ENCODE measurements at regions of chr1 and their contacts with region 1.

Region 1: GRCh38 chr1:23496490-23497181 is 12.7 kb upstream of the ASAP3 start:
- DNase-seq: no peak
- H3K4me3 ChIP-seq: no peak overlapping the region
- H3K27ac ChIP-seq: no peak overlapping the region
- H3K4me1 ChIP-seq: no peaks in the 10 kb centered on the region
- H3K27me3 ChIP-seq: no peaks in the 10 kb centered on the region
- CTCF ChIP-seq: no peak
- POLR2A ChIP-seq: no peak

Region 2: DNA sequence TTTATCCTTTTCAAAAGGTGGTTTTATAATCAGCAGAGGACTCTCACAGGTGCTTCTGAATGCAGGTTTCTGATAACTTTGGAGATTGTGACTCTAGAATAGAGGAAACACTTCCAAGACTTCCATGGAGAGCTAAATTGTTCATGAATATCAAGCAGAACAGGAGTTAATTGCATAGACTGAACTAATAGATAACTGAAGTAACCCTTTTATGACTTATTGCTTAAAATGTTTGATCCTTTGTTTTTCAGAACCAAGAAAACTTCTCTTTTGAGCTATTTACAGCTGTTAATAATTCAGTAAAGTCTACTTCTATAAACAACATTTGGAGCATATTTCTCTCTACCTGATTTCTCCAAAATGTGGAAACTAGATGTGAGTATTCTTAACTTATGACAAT is 500.9 kb before region 1 on chr1:
- CTCF ChIA-PET with region 1: no interaction called
- POLR2A ChIA-PET with region 1: no interaction called
- dilution Hi-C with region 1: no loop called
- intact Hi-C with region 1: no loop called
- DNase-seq: no peak
- H3K4me3 ChIP-seq: no peak overlapping the region
- H3K27ac ChIP-seq: no peak overlapping the region
- H3K4me1 ChIP-seq: no peaks in the 10 kb centered on the region
- H3K27me3 ChIP-seq: peaks cover 0 to 5% of the 10 kb centered on the region in 2 experiments
- CTCF ChIP-seq: no peak
- POLR2A ChIP-seq: no peak

Region 3: GRCh38 chr1:23463286-23463685 is 33.4 kb before region 1 on chr1:
- CTCF ChIA-PET with region 1: interaction called, 11 read pairs
- POLR2A ChIA-PET with region 1: no interaction called
- dilution Hi-C with region 1: no loop called
- intact Hi-C with region 1: no loop called
- DNase-seq: no peak
- H3K4me3 ChIP-seq: no peak overlapping the region
- H3K27ac ChIP-seq: no peak overlapping the region
- H3K4me1 ChIP-seq: no peaks in the 10 kb centered on the region
- H3K27me3 ChIP-seq: peaks cover 0 to 3% of the 10 kb centered on the region in 2 experiments
- CTCF ChIP-seq: no peak
- POLR2A ChIP-seq: no peak

Region 4: DNA sequence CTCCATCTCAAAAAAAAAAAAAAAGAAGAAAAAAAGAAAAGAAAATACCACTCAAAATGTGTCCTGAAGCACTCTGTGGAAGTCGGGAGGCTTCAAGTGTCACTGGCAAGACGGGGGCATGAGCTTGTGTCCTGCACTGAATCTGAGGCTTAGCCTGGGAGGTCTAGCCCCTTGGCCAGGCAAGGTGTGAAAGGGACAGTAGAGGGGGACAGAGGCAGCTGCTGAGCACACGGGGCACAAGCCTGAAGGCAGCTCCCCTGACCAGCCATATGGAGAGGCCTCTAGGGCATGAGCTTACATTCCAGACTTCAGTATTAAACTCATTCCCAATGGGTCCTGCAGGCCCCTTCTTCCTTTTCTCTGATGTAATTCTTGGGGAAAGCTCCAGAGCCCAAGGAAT is 10.9 kb after region 1 on chr1:
- CTCF ChIA-PET with region 1: interaction called, 65 read pairs
- POLR2A ChIA-PET with region 1: interaction called, 3 read pairs
- dilution Hi-C with region 1: no loop called
- intact Hi-C with region 1: no loop called
- DNase-seq: no peak
- H3K4me3 ChIP-seq: no peak overlapping the region
- H3K27ac ChIP-seq: no peak overlapping the region
- H3K4me1 ChIP-seq: no peaks in the 10 kb centered on the region
- H3K27me3 ChIP-seq: no peaks in the 10 kb centered on the region
- CTCF ChIP-seq: no peak
- POLR2A ChIP-seq: no peak

Region 5: DNA sequence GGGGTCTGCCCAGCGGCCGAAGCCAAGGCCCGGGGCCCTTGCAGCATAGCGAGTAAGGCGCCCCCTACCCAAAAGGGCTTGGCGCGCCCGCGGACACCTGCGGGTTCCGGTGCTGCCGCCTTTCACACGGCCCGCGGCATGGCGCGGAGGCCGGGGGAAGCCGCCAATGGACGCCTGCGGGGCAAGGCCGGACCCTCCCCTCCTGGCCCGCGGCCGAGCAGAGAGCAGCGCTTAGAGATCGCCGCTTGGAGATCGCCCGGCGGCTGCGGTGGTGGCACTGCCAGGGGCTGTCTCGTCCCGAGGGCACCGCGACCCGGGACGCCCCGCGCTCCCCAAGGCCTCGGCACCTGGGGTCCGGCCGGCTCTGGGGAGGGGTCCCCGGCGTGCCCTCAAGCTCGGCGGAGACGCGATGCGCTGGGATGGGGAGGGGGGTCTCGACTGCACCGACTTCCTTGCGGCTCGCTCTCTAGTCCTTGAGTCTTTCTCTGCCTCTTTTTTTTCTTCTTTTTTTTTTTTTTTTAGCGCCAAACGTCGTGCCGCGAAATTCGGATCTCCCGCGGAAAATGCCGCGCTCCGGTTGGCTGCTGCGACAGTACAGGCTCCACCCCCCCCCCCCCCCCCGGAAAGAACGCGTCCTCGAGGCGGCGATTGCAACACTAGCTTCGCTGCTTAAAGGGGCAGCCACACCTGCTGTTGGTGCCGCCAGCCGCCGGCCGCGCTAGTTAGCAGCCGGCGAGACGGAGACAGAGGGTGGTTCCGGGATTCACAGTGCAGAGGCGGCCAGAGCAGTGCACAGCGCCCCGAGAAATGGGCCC is 34.3 kb after region 1 on chr1 and contains the start of gene E2F2:
- CTCF ChIA-PET with region 1: interaction called, 192 read pairs
- POLR2A ChIA-PET with region 1: no interaction called
- dilution Hi-C with region 1: no loop called
- intact Hi-C with region 1: no loop called
- DNase-seq: peak; percentile 74
- H3K4me3 ChIP-seq: peak within 1 kb of the TSS; percentile 38 to 74 (median 68)
- H3K27ac ChIP-seq: peak within 1 kb of the TSS; percentile 73
- H3K4me1 ChIP-seq: peaks cover 35% of the 10 kb centered on the region
- H3K27me3 ChIP-seq: no peaks in the 10 kb centered on the region
- CTCF ChIP-seq: peak in 1 of 2 donors; percentile 18
- POLR2A ChIP-seq: no peak
- total RNA-seq, gene E2F2: 5.0 and 5.6 TPM in 2 replicates

Region 6: DNA sequence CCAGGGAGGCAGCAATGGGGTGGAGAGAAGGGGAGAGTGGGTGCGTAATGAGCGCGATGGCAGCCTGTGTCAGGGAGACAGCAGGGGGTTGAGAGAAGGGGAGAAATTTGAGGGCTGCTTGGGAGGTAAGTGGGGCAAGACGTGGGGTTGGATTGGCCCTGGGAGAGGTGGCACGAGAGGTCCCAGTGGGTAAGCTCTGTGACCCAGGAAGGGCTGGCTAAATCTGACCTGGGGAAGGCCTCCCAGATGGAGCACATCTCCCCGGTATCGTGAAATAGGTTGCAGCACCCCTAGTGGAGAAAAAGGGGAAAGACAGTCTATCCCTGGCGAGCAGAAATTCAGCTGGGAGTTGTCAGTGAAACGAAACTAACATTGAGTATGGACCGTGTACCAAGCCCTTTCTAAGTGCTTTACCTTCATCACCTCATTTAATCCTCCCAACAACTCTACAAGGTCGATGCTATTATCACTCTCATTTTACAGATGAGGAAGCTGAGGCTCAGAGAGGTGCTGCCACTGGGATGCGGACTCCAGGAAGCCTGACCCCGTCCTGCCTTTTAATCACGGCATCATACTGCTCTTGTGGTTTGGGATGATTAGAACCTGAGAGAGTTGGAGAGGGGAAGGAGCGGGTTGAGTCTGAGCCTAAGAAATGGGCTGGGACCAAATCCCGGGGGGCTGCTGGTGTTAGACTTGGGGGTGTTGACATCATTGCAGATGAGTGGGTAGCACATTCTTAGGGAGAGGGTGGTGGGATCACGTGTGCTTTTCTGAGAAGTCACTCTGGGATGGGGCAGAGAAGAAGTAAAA is 138.4 kb after region 1 on chr1:
- CTCF ChIA-PET with region 1: interaction called, 87 read pairs
- POLR2A ChIA-PET with region 1: no interaction called
- dilution Hi-C with region 1: no loop called
- intact Hi-C with region 1: loop called (anchors 1 kb)
- DNase-seq: peak; percentile 83
- H3K4me3 ChIP-seq: peak overlapping the region; percentile 24 to 78 (median 41)
- H3K27ac ChIP-seq: peak overlapping the region; percentile 67
- H3K4me1 ChIP-seq: no peaks in the 10 kb centered on the region
- H3K27me3 ChIP-seq: peaks cover 0 to 4% of the 10 kb centered on the region in 2 experiments
- CTCF ChIP-seq: peak; percentile 85 to 93
- POLR2A ChIP-seq: no peak

Region 7: DNA sequence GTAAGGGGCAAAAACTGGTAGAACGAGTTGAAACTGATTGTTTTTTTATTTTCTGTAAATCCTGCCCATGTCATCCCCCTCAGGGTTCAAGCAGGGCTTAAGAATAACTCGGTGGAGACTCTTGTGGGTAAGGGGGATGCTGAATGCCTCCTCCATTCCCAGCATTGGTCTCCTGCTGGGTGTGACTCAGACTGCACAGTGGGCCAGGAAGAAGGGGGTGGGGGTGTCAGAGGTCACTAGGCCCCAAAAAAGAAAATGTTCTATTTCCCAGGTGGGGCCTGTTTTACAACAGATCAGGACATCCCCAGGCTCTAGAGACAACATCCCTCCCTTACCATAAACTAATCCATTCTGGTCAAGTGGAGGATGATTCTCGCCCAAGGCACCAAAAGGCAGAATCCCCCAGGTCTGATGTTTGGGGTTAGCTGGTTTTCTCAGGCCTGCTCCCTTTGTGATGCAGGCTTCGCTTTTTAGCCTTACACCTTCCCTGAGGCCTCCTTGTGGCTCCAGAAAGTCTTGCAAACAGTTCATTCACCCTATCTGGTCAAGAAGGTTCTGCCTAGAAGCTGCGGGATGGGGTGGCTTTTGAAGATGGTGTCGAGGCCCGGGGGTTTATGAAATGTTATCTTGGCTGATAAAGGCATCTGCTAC is 811.9 kb after region 1 on chr1:
- CTCF ChIA-PET with region 1: no interaction called
- POLR2A ChIA-PET with region 1: no interaction called
- dilution Hi-C with region 1: no loop called
- intact Hi-C with region 1: no loop called
- DNase-seq: no peak
- H3K4me3 ChIP-seq: no peak overlapping the region
- H3K27ac ChIP-seq: no peak overlapping the region
- H3K4me1 ChIP-seq: no peaks in the 10 kb centered on the region
- H3K27me3 ChIP-seq: peaks cover 9 to 20% of the 10 kb centered on the region in 2 experiments
- CTCF ChIP-seq: peak in 1 of 2 donors; percentile 17
- POLR2A ChIP-seq: no peak